Heart right ventricle (tissue), 16 donors: ENCODE measurements at regions of chr11 and their contacts with region 1.

Region 1: GRCh38 chr11:116787786-116788486 is at the start of gene ZPR1:
- DNase-seq: peak; percentile 86 to 87
- ATAC-seq: peak; percentile 83 to 92 (median 90)
- H3K4me3 ChIP-seq: peak within 1 kb of the TSS; percentile 84 to 100 (median 94)
- H3K27ac ChIP-seq: peak within 1 kb of the TSS; percentile 2 to 94 (median 87)
- H3K4me1 ChIP-seq: peaks cover 7 to 35% (median 24%) of the 10 kb centered on the region in 9 donors
- H3K27me3 ChIP-seq: no peaks in the 10 kb centered on the region
- CTCF ChIP-seq: no peak
- total RNA-seq, gene ZPR1: 17.3 to 32.9 (median 22.6) TPM

Region 2: DNA sequence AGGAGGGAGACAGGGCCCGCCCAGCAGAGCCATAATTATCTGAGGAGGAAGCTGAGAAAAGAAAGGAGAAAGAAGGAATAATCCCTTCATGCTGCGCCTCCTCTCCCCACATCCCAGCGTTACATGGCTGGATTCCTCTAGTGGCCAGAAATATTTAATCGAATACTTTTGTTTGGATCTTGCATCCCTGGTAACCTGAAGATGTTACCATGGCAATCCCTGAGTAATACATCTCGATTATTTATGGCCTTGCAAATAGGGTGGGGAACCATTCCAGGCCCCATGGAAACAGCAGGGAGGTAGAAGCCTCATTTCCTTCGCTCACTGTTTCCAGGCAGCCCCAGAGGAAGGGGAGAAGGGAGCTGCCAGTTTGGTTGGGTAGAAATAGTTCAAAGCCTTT is 372.8 kb before region 1 on chr11:
- intact Hi-C with region 1: no loop called
- DNase-seq: no peak
- ATAC-seq: no peak
- H3K4me3 ChIP-seq: no peak overlapping the region
- H3K27ac ChIP-seq: no peak overlapping the region
- H3K4me1 ChIP-seq: no peaks in the 10 kb centered on the region
- H3K27me3 ChIP-seq: peaks cover 0 to 9% (median 1%) of the 10 kb centered on the region in 7 donors
- CTCF ChIP-seq: no peak

Region 3: GRCh38 chr11:116835791-116836631 is 48.1 kb after region 1 on chr11:
- intact Hi-C with region 1: loop called in 9 of 10 experiments (anchors 1 to 5 kb)
- DNase-seq: peak; percentile 83 to 91
- ATAC-seq: peak; percentile 81 to 90 (median 86)
- H3K4me3 ChIP-seq: peak overlapping the region in 9 of 10 donors; percentile 3 to 57 (median 46)
- H3K27ac ChIP-seq: peak overlapping the region; percentile 36 to 88 (median 83)
- H3K4me1 ChIP-seq: peaks cover 11 to 63% (median 38%) of the 10 kb centered on the region in 9 donors
- H3K27me3 ChIP-seq: no peaks in the 10 kb centered on the region
- CTCF ChIP-seq: peak; percentile 18 to 81 (median 57)

Region 4: GRCh38 chr11:117098269-117099232 is 310.6 kb after region 1 on chr11 and contains the start of gene SIK3:
- intact Hi-C with region 1: loop called in 1 of 10 experiments (anchors 5 kb)
- DNase-seq: peak; percentile 94 to 97
- ATAC-seq: peak; percentile 92 to 96 (median 95)
- H3K4me3 ChIP-seq: peak within 1 kb of the TSS; percentile 55 to 89 (median 84)
- H3K27ac ChIP-seq: peak within 1 kb of the TSS; percentile 91 to 100 (median 98)
- H3K4me1 ChIP-seq: peaks cover 11 to 57% (median 46%) of the 10 kb centered on the region in 9 donors
- H3K27me3 ChIP-seq: no peaks in the 10 kb centered on the region
- CTCF ChIP-seq: peak; percentile 14 to 83 (median 53)
- total RNA-seq, gene SIK3: 27.8 to 47.3 (median 39.3) TPM

Region 5: DNA sequence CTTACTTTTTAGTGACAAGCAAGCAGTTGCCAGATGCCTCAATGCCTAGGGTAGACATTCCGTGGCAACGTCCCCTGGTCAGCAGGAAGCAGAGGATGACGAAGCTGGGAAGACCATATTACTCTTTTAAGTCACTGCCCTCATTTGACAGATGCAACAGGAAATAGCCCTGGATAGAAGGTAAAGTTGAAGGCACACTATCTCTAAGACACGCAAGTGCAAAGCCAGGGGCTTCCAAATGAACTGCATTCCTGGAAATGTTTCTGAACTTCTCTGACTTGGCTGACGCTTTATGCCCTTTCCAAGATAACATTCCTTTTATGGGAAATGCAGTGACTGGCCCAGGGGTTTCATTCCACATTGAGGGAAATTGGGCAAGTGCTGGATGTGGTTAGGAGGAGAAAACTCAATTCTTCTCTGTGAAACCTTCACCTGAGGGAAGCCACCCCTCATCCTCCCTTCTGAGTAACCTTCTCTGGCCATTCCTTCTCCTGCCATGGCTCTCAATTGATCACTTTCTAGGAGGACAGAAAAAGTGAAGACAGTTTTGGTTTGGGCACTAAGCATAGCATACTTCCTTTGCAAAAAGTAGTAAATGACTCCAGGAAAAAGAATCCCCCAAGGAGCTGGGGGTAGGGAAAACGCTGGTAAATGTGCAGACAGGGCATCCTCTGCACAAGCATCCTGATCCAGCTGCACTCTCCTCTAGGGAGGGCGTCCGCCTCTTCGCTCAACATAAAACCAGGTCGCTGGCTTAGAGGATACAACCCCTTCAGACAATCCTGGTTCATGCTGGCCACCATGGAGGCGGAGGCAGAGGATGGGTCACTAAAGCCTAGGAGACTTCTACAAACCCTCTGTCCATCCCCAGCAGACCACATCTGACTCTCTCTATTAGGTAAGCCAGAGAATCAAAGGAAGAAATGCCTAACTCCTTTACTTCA is 429.5 kb after region 1 on chr11:
- intact Hi-C with region 1: loop called in 3 of 10 experiments (anchors 5 to 10 kb)
- DNase-seq: peak in 1 of 2 donors; percentile 7
- ATAC-seq: no peak
- H3K4me3 ChIP-seq: no peak overlapping the region
- H3K27ac ChIP-seq: peak overlapping the region; percentile 64 to 97 (median 88)
- H3K4me1 ChIP-seq: peaks cover 32 to 65% (median 51%) of the 10 kb centered on the region in 9 donors
- H3K27me3 ChIP-seq: no peaks in the 10 kb centered on the region
- CTCF ChIP-seq: no peak